Activated T-helper 2 cell treated with anti-CD3 and anti-CD28 coated beads, Interferon-gamma antibody, Interleukin-2, Interleukin-4, amounts not matched to agents 10 μg/mL and 5 μg/mL and 100 μg/mL, durations not matched to agents 14 hours and 24 hours and 36 hours (primary cell): ENCODE measurements at regions of chr6 and their contacts with region 1.

Region 1: GRCh38 chr6:82247634-82248232 is at the start of gene IBTK:
- DNase-seq: peak; percentile 88
- H3K4me3 Mint-ChIP-seq: peak within 1 kb of the TSS; percentile 91
- H3K27ac Mint-ChIP-seq: peak within 1 kb of the TSS; percentile 93
- H3K4me1 Mint-ChIP-seq: peaks cover 31% of the 10 kb centered on the region
- H3K27me3 Mint-ChIP-seq: no peaks in the 10 kb centered on the region
- total RNA-seq, gene IBTK: 40.5 and 42.5 TPM in 2 replicates

Region 2: DNA sequence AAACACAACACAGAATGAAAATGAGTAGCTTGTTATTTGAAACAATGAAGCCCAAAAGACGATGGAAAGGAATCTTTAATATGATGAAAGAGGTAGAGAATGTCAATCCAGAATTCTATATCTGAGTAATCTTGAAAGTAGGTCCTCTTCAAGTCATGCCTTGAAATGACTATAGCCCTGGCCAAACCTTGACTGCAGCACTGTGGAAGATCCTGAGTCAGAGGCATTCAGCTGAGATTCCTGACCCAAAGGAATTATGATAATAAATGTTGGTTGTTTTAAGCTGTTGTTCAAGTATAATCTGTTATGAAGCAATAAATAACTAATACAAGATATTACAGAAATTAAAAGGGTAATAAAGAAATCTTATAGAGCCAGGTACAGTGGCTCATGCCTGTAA is 65.0 kb before region 1 on chr6:
- intact Hi-C with region 1: loop called (anchors 5 kb)
- DNase-seq: no peak
- H3K4me3 Mint-ChIP-seq: no peak overlapping the region
- H3K27ac Mint-ChIP-seq: no peak overlapping the region
- H3K4me1 Mint-ChIP-seq: peaks cover 10% of the 10 kb centered on the region
- H3K27me3 Mint-ChIP-seq: no peaks in the 10 kb centered on the region

Region 3: GRCh38 chr6:82227770-82228169 is 20.0 kb before region 1 on chr6:
- intact Hi-C with region 1: loop called (anchors 2 kb)
- DNase-seq: no peak
- H3K4me3 Mint-ChIP-seq: no peak overlapping the region
- H3K27ac Mint-ChIP-seq: peak overlapping the region; percentile 40
- H3K4me1 Mint-ChIP-seq: peaks cover 21% of the 10 kb centered on the region
- H3K27me3 Mint-ChIP-seq: no peaks in the 10 kb centered on the region

Region 4: DNA sequence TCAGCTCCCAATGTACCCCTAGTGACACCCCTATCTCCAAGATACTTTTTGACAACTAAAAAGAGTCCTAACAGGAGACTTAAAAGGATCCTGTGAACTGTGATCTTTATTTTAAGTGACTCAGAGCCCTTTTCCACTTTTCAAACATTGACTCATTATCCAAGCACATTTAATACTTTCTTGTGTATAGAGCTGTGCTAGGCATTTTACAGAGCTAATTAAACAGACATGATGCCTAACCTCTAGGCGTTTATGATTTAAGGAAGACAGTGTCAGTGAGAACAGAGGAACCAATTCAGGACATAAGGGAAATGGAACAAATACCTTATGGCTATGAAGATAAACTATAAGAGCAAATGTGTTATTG is 398.5 kb after region 1 on chr6:
- intact Hi-C with region 1: no loop called
- DNase-seq: no peak
- H3K4me3 Mint-ChIP-seq: no peak overlapping the region
- H3K27ac Mint-ChIP-seq: no peak overlapping the region
- H3K4me1 Mint-ChIP-seq: no peaks in the 10 kb centered on the region
- H3K27me3 Mint-ChIP-seq: no peaks in the 10 kb centered on the region

Region 5: DNA sequence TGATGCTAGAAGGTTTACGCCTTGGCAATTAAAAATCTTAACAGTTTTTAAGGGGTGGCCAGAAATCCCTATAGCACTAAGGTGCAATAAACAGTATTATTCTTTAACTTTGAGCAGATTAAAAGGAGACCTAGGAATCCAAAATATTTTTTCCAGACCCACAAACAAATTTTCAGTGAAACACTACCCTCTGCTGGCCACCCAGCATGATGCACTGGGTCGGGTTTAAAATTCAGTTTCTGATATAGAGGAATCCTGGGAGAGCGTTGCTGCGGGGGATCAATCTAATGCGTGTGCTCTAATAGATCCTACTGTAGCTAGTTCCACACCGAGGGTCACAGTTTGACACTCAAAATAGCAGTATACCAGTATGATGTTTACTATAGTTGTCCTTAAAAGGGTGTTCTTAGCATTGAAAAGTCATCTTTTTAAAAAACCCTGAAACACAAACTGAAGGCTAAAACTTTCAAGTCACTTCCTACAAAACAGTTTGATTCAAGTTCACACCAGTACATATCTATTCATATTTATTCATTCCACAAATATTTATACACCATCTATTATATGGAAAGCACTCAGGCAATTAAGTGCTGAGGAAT is 807.7 kb after region 1 on chr6:
- intact Hi-C with region 1: loop called (anchors 1 kb)
- DNase-seq: no peak
- H3K4me3 Mint-ChIP-seq: no peak overlapping the region
- H3K27ac Mint-ChIP-seq: no peak overlapping the region
- H3K4me1 Mint-ChIP-seq: peaks cover 4% of the 10 kb centered on the region
- H3K27me3 Mint-ChIP-seq: no peaks in the 10 kb centered on the region

Region 6: DNA sequence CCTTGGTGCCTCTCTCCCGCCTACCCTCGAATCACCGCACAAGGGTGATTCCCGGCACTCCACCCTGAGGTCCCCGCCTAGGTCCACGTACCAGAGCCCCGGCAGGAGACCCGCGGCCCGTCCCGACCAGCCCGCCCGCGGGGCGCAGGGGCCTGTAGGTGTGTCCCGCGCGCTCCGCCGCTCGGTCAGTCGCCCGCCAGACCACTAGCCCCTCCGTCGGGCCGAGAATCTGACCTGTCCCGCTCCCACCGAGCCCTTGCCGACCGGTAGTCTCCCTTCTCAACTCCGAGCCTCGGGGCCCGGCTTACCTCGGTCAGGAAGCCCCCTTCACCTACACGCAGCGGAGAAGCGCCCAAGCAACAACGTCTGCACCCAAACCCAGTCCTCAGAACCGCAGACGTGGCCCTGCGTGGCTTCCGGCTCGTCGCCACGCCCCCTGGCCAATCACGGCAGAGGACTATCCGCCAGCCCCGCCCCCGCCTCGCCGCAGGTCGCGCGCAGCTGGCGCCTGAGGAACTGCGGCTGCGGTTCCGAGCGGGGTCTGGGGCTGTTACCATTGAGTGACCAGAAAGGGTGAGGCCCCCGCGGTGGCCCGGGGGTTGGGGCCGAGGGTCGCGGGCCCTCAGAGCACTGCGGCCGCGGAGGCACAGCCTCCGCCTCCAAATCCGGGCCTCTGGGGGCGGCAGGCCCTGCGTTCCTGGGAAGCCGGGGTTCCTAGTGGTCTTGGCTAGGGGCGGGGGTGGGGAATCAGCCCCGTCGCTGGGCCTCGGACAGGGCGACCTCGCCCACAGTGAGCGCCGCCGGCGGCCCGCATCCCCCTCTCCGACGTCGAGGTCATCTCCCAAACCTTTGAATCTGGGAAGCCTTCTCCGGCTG is 945.4 kb after region 1 on chr6 and contains the starts of genes PGM3 and RWDD2A:
- intact Hi-C with region 1: loop called (anchors 5 kb)
- DNase-seq: peak; percentile 85
- H3K4me3 Mint-ChIP-seq: peak within 1 kb of the TSS; percentile 90
- H3K27ac Mint-ChIP-seq: peak within 1 kb of the TSS; percentile 89
- H3K4me1 Mint-ChIP-seq: peaks cover 17% of the 10 kb centered on the region
- H3K27me3 Mint-ChIP-seq: peaks cover 6% of the 10 kb centered on the region
- total RNA-seq, gene PGM3: 29.2 and 31.3 TPM in 2 replicates
- total RNA-seq, gene RWDD2A: 1.4 and 1.5 TPM in 2 replicates